Esophagus muscularis mucosa (tissue), 4 donors: ENCODE measurements at regions of chr5 and their contacts with region 1.

Region 1: GRCh38 chr5:180126726-180127681 is 55.4 kb upstream of the RNF130 start:
- DNase-seq: peak; percentile 66
- H3K4me3 ChIP-seq: no peak overlapping the region
- H3K27ac ChIP-seq: no peak overlapping the region
- H3K4me1 ChIP-seq: peaks cover 0 to 9% (median 6%) of the 10 kb centered on the region in 4 donors
- H3K27me3 ChIP-seq: peaks cover 0 to 28% (median 2%) of the 10 kb centered on the region in 4 donors
- CTCF ChIP-seq: peak; percentile 62 to 88 (median 64)
- EP300 ChIP-seq: no peak
- POLR2A ChIP-seq: no peak

Region 2: DNA sequence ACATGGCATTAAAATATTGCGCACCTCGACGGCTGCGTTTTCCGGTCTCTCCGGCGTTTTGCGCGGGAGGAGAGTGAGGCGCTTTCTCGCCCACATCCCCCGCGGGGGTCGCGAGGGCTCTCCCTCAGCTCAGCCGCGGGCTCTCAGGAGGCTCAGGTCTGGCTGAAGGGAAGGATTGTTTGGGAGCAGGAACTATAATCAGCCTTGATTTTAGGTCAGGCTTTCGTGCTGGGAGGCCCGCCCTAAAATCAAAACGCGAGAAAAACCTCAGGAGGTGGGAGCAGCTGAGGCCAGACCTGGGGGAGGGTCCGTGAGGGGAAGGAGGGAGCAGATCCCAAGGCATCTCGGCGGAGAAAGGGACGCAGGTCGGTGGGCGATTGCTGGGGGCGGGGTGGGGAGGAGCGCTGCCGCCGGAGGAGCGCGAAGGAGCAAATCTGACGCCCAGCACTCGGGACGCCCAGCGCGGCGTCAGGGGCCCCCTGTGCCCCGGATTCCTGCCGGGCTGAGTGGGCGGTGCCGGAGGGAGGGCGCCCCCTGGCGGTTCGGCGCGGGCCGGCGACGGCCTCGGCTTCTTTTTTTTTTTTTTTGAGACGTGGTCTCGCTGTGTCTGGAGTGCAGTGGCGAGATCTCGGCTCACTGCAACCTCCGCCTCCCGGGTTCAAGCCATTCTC is 36.8 kb before region 1 on chr5:
- intact Hi-C with region 1: no loop called
- DNase-seq: no peak
- H3K4me3 ChIP-seq: peak overlapping the region; percentile 59 to 68 (median 67)
- H3K27ac ChIP-seq: peak overlapping the region; percentile 72 to 85 (median 82)
- H3K4me1 ChIP-seq: peaks cover 4 to 17% (median 14%) of the 10 kb centered on the region in 4 donors
- H3K27me3 ChIP-seq: no peaks in the 10 kb centered on the region
- CTCF ChIP-seq: peak; percentile 69 to 93 (median 86)
- EP300 ChIP-seq: no peak
- POLR2A ChIP-seq: no peak

Region 3: GRCh38 chr5:180161420-180162303 is 34.7 kb after region 1 on chr5:
- intact Hi-C with region 1: no loop called
- DNase-seq: peak; percentile 90
- H3K4me3 ChIP-seq: no peak overlapping the region
- H3K27ac ChIP-seq: no peak overlapping the region
- H3K4me1 ChIP-seq: peaks cover 0 to 5% (median 0%) of the 10 kb centered on the region in 4 donors
- H3K27me3 ChIP-seq: peaks cover 0 to 14% (median 0%) of the 10 kb centered on the region in 4 donors
- CTCF ChIP-seq: peak in 1 of 3 experiments; percentile 5
- EP300 ChIP-seq: no peak
- POLR2A ChIP-seq: no peak

Region 4: DNA sequence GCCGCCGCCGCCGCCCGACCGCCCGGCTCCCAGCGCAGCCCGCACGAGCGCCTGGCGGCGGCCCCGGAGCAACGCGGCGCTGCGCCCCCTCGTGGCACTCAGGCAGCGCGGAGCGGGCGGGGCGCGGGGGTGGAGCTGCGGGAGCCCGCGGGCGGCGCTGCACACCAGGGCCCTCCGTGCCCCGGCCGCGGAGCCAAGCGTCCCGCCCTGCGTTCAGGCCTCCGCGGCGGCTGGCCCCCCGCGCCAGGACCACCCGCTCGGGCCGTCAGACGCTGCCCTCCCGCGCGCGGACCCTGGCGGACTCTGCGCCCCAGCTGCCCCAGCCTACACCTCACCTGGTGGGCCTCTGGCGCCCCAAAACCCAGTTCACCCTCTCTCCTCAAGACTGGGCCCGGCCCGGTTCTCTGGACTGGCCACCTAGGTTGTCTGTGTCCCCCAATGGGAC is 82.2 kb after region 1 on chr5 and contains the start of gene RASGEF1C:
- intact Hi-C with region 1: loop called (anchors 5 kb)
- DNase-seq: no peak
- H3K4me3 ChIP-seq: peak within 1 kb of the TSS; percentile 49 to 65 (median 50)
- H3K27ac ChIP-seq: no peak within 1 kb of the TSS
- H3K4me1 ChIP-seq: peaks cover 0 to 24% (median 15%) of the 10 kb centered on the region in 4 donors
- H3K27me3 ChIP-seq: peaks cover 0 to 66% (median 10%) of the 10 kb centered on the region in 4 donors
- CTCF ChIP-seq: peak; percentile 30 to 49 (median 43)
- EP300 ChIP-seq: no peak
- POLR2A ChIP-seq: no peak
- total RNA-seq, gene RASGEF1C: 1.2 to 3.1 (median 2.5) TPM

Region 5: GRCh38 chr5:180470966-180471582 is 344.1 kb after region 1 on chr5:
- intact Hi-C with region 1: loop called (anchors 5 kb)
- DNase-seq: no peak
- H3K4me3 ChIP-seq: no peak overlapping the region
- H3K27ac ChIP-seq: no peak overlapping the region
- H3K4me1 ChIP-seq: peaks cover 0 to 19% (median 7%) of the 10 kb centered on the region in 4 donors
- H3K27me3 ChIP-seq: peaks cover 0 to 13% (median 0%) of the 10 kb centered on the region in 4 donors
- CTCF ChIP-seq: peak; percentile 78 to 94 (median 87)
- EP300 ChIP-seq: no peak
- POLR2A ChIP-seq: no peak